Panc1 (cell line): ENCODE measurements at regions of chr10 and their contacts with region 1.

Region 1: DNA sequence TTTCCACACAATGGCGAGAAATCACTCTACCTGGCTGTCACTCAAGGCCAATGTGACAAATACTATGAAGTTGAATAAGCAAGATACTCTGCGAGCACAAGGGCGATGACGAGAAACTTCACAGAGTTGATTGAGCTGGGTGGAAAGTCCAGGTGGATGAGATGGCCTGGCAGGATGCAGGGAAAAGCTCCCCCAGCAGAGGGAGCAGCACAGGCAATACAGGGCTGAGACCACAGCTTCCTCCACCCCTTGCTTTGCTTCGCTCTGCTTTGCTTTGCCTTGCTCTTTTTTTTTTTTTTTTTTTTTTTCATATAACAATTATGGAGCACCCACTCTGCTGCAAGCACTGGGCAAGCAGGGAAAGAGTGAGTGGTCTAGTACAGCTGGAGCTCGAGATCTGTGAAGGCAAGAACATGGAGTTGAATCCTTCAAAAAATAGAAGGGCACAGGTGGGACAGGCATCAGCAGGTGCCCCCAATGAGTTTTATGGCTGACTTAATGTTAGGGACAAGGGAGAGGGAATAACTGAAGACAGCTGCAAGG is 88.3 kb downstream of the CABCOCO1 start:
- DNase-seq: no peak
- ATAC-seq: peak; percentile 85
- H3K4me3 ChIP-seq: no peak overlapping the region
- H3K27ac ChIP-seq: peak overlapping the region; percentile 94
- H3K4me1 ChIP-seq: peaks cover 37% of the 10 kb centered on the region
- H3K27me3 ChIP-seq: no peaks in the 10 kb centered on the region
- CTCF ChIP-seq: peak; percentile 85

Region 2: GRCh38 chr10:61896854-61897661 is 146.1 kb after region 1 on chr10:
- CTCF ChIA-PET with region 1: interaction called, 5 read pairs
- POLR2A ChIA-PET with region 1: interaction called, 3 read pairs
- in situ Hi-C with region 1: no loop called
- intact Hi-C with region 1: loop called (anchors 5 kb)
- DNase-seq: peak; percentile 67
- ATAC-seq: peak; percentile 53
- H3K4me3 ChIP-seq: peak overlapping the region; percentile 19 to 64
- H3K27ac ChIP-seq: peak overlapping the region; percentile 100
- H3K4me1 ChIP-seq: peaks cover 41% of the 10 kb centered on the region
- H3K27me3 ChIP-seq: no peaks in the 10 kb centered on the region
- CTCF ChIP-seq: peak; percentile 88

Region 3: DNA sequence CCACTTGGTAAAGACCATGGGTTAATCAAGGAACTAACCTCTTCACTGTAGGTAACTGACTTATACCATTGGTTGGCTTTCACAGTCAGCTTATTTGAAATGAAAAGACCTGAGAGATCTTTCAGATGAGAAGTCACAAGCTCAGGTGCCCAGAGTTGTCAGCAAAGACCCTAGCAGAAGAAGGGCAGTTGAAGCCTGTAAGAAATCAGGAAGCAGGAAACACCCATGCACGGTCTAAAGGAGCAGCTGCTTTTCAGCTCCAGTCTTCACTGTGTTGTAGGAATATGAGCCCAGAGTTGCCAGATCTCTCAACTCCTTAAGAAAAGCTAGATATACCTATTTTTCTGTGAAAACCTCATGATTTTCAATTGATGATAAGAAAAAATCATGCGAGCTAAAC is 280.5 kb after region 1 on chr10:
- CTCF ChIA-PET with region 1: interaction called, 15 read pairs
- POLR2A ChIA-PET with region 1: no interaction called
- in situ Hi-C with region 1: no loop called
- intact Hi-C with region 1: no loop called
- DNase-seq: no peak
- ATAC-seq: no peak
- H3K4me3 ChIP-seq: no peak overlapping the region
- H3K27ac ChIP-seq: no peak overlapping the region; the same call in 1 of the 2 replicates
- H3K4me1 ChIP-seq: peaks cover 13% of the 10 kb centered on the region
- H3K27me3 ChIP-seq: no peaks in the 10 kb centered on the region
- CTCF ChIP-seq: no peak